ENCODE measurements at regions of chr2 and their contacts with region 1.

Region 1: GRCh38 chr2:107669335-107669734 is 157.4 kb upstream of the RGPD4 start:
- DNase-seq: no peak
- H3K4me3 ChIP-seq: no peak overlapping the region
- H3K27ac ChIP-seq: no peak overlapping the region
- H3K4me1 ChIP-seq: no peaks in the 10 kb centered on the region
- H3K27me3 ChIP-seq: no peaks in the 10 kb centered on the region
- CTCF ChIP-seq: peak; percentile 20 to 43

Region 2: GRCh38 chr2:107569496-107569895 is 99.8 kb before region 1 on chr2:
- CTCF ChIA-PET with region 1: no interaction called
- dilution Hi-C with region 1: no loop called
- in situ Hi-C with region 1: no loop called
- intact Hi-C with region 1: loop called (anchors 1 kb)
- DNase-seq: no peak
- H3K4me3 ChIP-seq: no peak overlapping the region
- H3K27ac ChIP-seq: no peak overlapping the region
- H3K4me1 ChIP-seq: no peaks in the 10 kb centered on the region
- H3K27me3 ChIP-seq: no peaks in the 10 kb centered on the region
- CTCF ChIP-seq: no peak

Measured in mammary epithelial cell (primary cell).